Naive thymus-derived CD4-positive, alpha-beta T cell (primary cell): ENCODE measurements at regions of chr4 and their contacts with region 1.

Region 1: DNA sequence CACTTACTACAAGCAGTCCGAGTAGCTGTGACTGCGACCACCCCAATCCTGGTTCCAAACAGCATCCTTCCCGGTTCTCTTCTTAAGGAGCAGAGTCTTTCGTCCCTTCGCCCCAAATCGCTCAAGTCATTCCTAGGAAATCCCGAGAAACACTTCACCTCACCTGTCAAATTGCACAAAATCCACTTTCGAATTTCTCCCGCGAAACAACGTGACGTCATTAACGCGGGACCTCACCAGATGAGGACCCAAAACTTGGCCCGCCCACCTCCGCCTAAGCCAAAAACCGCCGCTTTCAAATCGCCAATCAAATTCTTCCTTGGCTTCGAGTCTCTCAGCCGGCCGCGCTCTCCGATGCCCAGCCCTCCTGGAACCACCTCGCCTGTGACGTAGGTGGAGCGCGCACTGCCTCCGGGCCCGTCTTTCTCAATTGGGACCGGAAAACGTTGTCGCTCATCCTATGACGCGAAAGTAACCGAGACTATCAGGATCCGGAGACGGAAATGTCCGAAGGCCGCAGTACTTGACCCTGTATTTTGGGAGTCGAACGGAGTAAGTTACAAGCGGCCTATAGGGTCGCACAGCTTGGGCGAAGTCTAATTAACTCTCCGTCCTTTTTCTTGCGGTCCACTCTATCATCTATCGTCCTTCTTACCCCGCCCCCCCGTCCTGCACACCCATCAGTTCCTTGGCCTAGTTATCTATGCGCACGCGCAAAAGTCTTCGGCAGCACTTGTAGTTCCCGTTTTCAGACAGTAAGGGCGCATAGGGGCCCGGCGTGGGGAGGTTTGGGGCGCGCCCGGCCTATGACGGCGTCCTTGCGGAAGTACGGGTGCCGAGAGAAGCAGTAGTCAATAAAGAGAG is at the starts of genes LARP7 and ZGRF1:
- DNase-seq: peak; percentile 91 to 99 (median 99)
- ATAC-seq: peak; percentile 91
- H3K4me3 ChIP-seq: peak within 1 kb of the TSS; percentile 98
- H3K4me3 Mint-ChIP-seq: peak within 1 kb of the TSS in 2 of 10 donors; percentile 26 to 46
- H3K27ac ChIP-seq: peak within 1 kb of the TSS; percentile 88
- H3K27ac Mint-ChIP-seq: peak within 1 kb of the TSS in 1 of 9 donors; percentile 66
- H3K4me1 ChIP-seq: peaks cover 9 to 17% of the 10 kb centered on the region in 2 donors
- H3K4me1 Mint-ChIP-seq: peaks cover 19 to 29% (median 21%) of the 10 kb centered on the region in 7 donors
- H3K27me3 ChIP-seq: no peaks in the 10 kb centered on the region
- H3K27me3 Mint-ChIP-seq: no peaks in the 10 kb centered on the region
- total RNA-seq, gene LARP7: 28.6 to 48.2 (median 47.7) TPM
- total RNA-seq, gene ZGRF1: 8.1 to 29.8 (median 10.5) TPM

Region 2: GRCh38 chr4:112145326-112145819 is 491.5 kb before region 1 on chr4 and contains the start of gene FAM241A:
- CTCF ChIA-PET with region 1: no interaction called
- POLR2A ChIA-PET with region 1: interaction called, 3 read pairs
- intact Hi-C with region 1: loop called (anchors 1 kb)
- DNase-seq: peak; percentile 81 to 92 (median 88)
- ATAC-seq: peak; percentile 98
- H3K4me3 ChIP-seq: peak within 1 kb of the TSS; percentile 89
- H3K4me3 Mint-ChIP-seq: peak within 1 kb of the TSS; percentile 90 to 99 (median 94)
- H3K27ac ChIP-seq: peak within 1 kb of the TSS; percentile 78
- H3K27ac Mint-ChIP-seq: peak within 1 kb of the TSS; percentile 75 to 98 (median 95)
- H3K4me1 ChIP-seq: peaks cover 0 to 12% of the 10 kb centered on the region in 2 donors
- H3K4me1 Mint-ChIP-seq: peaks cover 16 to 44% (median 40%) of the 10 kb centered on the region in 7 donors
- H3K27me3 ChIP-seq: no peaks in the 10 kb centered on the region
- H3K27me3 Mint-ChIP-seq: peaks cover 0 to 5% (median 0%) of the 10 kb centered on the region in 5 donors
- total RNA-seq, gene FAM241A: 1.2 to 2.4 (median 2.0) TPM

Region 3: DNA sequence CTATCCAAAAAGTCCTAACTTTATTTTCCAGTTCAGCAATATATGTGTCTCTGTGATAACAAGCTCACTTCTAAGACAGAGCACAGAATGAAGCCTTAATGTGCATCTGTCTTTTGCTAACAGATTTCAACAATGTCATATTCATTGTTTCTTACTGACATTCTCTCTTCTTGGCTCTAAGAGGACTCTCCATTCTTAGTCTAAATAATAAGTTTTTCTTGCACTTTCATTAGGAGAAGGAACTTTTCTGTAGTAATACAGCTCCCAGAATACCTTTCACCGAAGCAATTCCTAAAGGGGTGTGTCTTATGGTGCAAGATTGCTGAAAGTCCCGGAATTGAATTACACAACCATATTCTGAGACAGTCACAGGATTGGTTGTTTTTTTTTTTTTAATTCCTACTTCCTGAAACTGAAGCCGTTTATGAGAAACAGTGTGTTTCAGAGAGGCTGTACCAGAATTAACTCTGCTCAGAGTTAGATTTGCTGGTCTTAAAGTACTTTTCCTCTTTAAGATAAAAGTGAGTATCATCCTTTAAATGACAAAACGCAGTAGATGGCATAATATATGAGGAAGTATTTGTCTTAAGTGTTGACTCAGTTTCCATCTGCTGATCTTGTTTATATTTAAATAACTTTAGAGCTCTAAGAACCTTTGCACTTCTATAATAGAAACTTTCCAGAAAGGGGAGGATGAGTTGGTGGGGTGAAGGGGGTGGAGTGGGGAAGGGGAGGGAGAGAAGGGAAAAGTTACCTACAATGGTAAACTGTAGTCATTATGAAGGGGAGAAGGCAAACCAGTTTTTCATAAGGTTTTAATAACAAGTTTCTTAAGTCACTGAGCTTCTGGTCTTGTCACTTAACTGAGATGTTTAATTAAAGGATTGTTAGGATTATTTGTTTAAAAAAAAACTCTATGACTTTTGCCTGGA is 339.7 kb before region 1 on chr4 and contains the start of gene ALPK1:
- CTCF ChIA-PET with region 1: no interaction called
- POLR2A ChIA-PET with region 1: no interaction called
- intact Hi-C with region 1: loop called in 1 of 2 experiments (anchors 1 kb)
- DNase-seq: peak in 6 of 9 donors; percentile 26 to 58 (median 40)
- ATAC-seq: peak; percentile 92
- H3K4me3 ChIP-seq: peak within 1 kb of the TSS; percentile 22
- H3K4me3 Mint-ChIP-seq: peak within 1 kb of the TSS; percentile 75 to 91 (median 88)
- H3K27ac ChIP-seq: peak within 1 kb of the TSS; percentile 62
- H3K27ac Mint-ChIP-seq: peak within 1 kb of the TSS; percentile 75 to 97 (median 91)
- H3K4me1 ChIP-seq: peaks cover 4 to 35% of the 10 kb centered on the region in 2 donors
- H3K4me1 Mint-ChIP-seq: peaks cover 12 to 34% (median 30%) of the 10 kb centered on the region in 7 donors
- H3K27me3 ChIP-seq: no peaks in the 10 kb centered on the region
- H3K27me3 Mint-ChIP-seq: no peaks in the 10 kb centered on the region
- total RNA-seq, gene ALPK1: 15.5 to 35.0 (median 19.8) TPM

Region 4: GRCh38 chr4:112523764-112524505 is 113.0 kb before region 1 on chr4:
- CTCF ChIA-PET with region 1: no interaction called
- POLR2A ChIA-PET with region 1: no interaction called
- intact Hi-C with region 1: loop called in 1 of 2 experiments (anchors 1 kb)
- DNase-seq: peak; percentile 52 to 83 (median 71)
- ATAC-seq: peak; percentile 90
- H3K4me3 ChIP-seq: peak overlapping the region; percentile 69
- H3K4me3 Mint-ChIP-seq: peak overlapping the region; percentile 82 to 96 (median 90)
- H3K27ac ChIP-seq: no peak overlapping the region
- H3K27ac Mint-ChIP-seq: peak overlapping the region in 2 of 9 donors; percentile 11 to 62
- H3K4me1 ChIP-seq: peaks cover 7 to 22% of the 10 kb centered on the region in 2 donors
- H3K4me1 Mint-ChIP-seq: peaks cover 15 to 44% (median 33%) of the 10 kb centered on the region in 7 donors
- H3K27me3 ChIP-seq: peaks cover 16 to 40% of the 10 kb centered on the region in 2 donors
- H3K27me3 Mint-ChIP-seq: peaks cover 52 to 84% (median 63%) of the 10 kb centered on the region in 5 donors

Region 5: DNA sequence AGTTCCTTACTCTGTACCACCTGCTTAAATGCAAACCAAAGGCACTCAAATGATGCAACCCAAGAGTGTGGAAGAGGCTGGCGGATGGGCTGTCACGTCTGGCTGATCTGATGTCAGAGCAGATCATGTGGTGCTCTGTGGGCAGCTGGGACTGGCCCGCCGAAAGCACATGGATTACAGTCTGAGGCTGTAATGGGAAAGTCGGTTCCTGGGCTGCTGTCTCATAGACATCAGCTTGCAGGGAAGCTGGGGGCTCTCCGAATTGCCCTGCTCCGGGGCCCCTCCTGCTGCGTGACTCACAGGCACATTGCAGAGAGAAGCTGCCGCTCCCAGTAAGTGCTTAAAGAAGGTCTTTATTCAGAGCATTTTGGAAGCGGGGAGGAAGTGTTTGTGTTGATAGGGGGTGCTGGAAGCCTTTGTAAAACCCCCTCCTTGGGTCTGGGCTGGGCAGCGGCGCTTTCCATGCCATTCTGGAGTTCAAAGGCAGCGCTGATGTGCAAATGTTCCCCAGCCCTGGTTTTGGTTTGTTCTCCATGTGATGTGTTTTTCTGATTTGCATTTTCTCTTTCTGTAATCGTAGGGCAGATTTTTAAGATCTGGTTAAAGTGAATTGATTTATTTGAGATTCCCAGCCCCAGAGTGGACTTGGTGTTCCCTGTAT is 181.1 kb after region 1 on chr4:
- CTCF ChIA-PET with region 1: no interaction called
- POLR2A ChIA-PET with region 1: no interaction called
- intact Hi-C with region 1: loop called in 1 of 2 experiments (anchors 5 kb)
- DNase-seq: peak in 1 of 9 donors; percentile 55
- ATAC-seq: peak; percentile 56
- H3K4me3 ChIP-seq: no peak overlapping the region
- H3K4me3 Mint-ChIP-seq: peak overlapping the region in 9 of 10 donors; percentile 4 to 84 (median 29)
- H3K27ac ChIP-seq: no peak overlapping the region
- H3K27ac Mint-ChIP-seq: peak overlapping the region in 1 of 9 donors; percentile 85
- H3K4me1 ChIP-seq: no peaks in the 10 kb centered on the region
- H3K4me1 Mint-ChIP-seq: peaks cover 7 to 22% (median 9%) of the 10 kb centered on the region in 7 donors
- H3K27me3 ChIP-seq: no peaks in the 10 kb centered on the region
- H3K27me3 Mint-ChIP-seq: peaks cover 6 to 35% (median 29%) of the 10 kb centered on the region in 5 donors

Region 6: DNA sequence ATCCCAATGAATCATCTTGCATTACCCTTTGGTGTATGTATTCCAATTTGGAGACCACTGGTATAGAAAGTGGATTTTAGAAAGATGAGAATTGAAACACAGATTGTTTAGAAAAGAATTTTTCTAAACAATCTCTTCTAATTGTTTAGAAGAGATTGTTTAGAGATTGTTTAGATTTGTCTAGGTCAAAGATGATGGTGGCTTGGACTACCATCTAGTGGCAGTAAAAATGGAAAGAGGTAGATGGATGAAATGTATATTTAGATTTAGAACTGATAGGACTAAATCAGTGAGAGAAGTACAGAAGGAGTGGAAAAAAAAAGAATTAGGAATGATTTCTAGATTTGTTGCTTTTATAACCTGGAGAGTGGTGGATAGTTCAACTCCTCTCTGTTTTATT is 1271.9 kb after region 1 on chr4:
- CTCF ChIA-PET with region 1: no interaction called
- POLR2A ChIA-PET with region 1: no interaction called
- intact Hi-C with region 1: loop called in 1 of 2 experiments (anchors 5 kb)
- DNase-seq: peak in 5 of 9 donors; percentile 10 to 31 (median 26)
- ATAC-seq: no peak
- H3K4me3 ChIP-seq: no peak overlapping the region
- H3K4me3 Mint-ChIP-seq: no peak overlapping the region
- H3K27ac ChIP-seq: no peak overlapping the region
- H3K27ac Mint-ChIP-seq: peak overlapping the region in 2 of 9 donors; percentile 2 to 7
- H3K4me1 ChIP-seq: peaks cover 12 to 24% of the 10 kb centered on the region in 2 donors
- H3K4me1 Mint-ChIP-seq: peaks cover 6 to 57% (median 46%) of the 10 kb centered on the region in 7 donors
- H3K27me3 ChIP-seq: no peaks in the 10 kb centered on the region
- H3K27me3 Mint-ChIP-seq: no peaks in the 10 kb centered on the region